IMR-90 (cell line): ENCODE measurements at regions of chr19 and their contacts with region 1.

Region 1: GRCh38 chr19:44903602-44904425 is 1.8 kb upstream of the APOE start:
- DNase-seq: peak; percentile 49
- ATAC-seq: peak; percentile 88
- H3K4me3 ChIP-seq: no peak overlapping the region
- H3K27ac ChIP-seq: no peak overlapping the region
- H3K4me1 ChIP-seq: peaks cover 3% of the 10 kb centered on the region; the same call in 1 of the 2 replicates
- H3K27me3 ChIP-seq: peaks cover 8% of the 10 kb centered on the region
- CTCF ChIP-seq: peak; percentile 95
- POLR2A ChIP-seq: no peak
- RAD21 ChIP-seq: peak; percentile 86

Region 2: GRCh38 chr19:44869733-44870470 is 33.9 kb before region 1 on chr19:
- CTCF ChIA-PET with region 1: no interaction called
- POLR2A ChIA-PET with region 1: no interaction called
- dilution Hi-C with region 1: no loop called
- in situ Hi-C with region 1: no loop called
- intact Hi-C with region 1: no loop called
- DNase-seq: peak; percentile 84
- ATAC-seq: peak; percentile 65
- H3K4me3 ChIP-seq: no peak overlapping the region
- H3K27ac ChIP-seq: no peak overlapping the region
- H3K4me1 ChIP-seq: peaks cover 2% of the 10 kb centered on the region; the same call in 1 of the 2 replicates
- H3K27me3 ChIP-seq: no peaks in the 10 kb centered on the region
- CTCF ChIP-seq: no peak
- POLR2A ChIP-seq: no peak
- RAD21 ChIP-seq: no peak

Region 3: GRCh38 chr19:44954824-44955586 is 51.2 kb after region 1 on chr19 and contains the start of gene CLPTM1:
- CTCF ChIA-PET with region 1: interaction called, 10 read pairs
- POLR2A ChIA-PET with region 1: no interaction called
- dilution Hi-C with region 1: no loop called
- in situ Hi-C with region 1: no loop called
- intact Hi-C with region 1: loop called (anchors 1 kb)
- DNase-seq: peak; percentile 97
- ATAC-seq: peak; percentile 95
- H3K4me3 ChIP-seq: peak within 1 kb of the TSS; percentile 84
- H3K27ac ChIP-seq: peak within 1 kb of the TSS; percentile 95
- H3K4me1 ChIP-seq: peaks cover 7% of the 10 kb centered on the region
- H3K27me3 ChIP-seq: no peaks in the 10 kb centered on the region
- CTCF ChIP-seq: no peak
- POLR2A ChIP-seq: peak; percentile 80
- RAD21 ChIP-seq: no peak
- total RNA-seq, gene CLPTM1: 23.8 and 27.8 TPM in 2 replicates

Region 4: DNA sequence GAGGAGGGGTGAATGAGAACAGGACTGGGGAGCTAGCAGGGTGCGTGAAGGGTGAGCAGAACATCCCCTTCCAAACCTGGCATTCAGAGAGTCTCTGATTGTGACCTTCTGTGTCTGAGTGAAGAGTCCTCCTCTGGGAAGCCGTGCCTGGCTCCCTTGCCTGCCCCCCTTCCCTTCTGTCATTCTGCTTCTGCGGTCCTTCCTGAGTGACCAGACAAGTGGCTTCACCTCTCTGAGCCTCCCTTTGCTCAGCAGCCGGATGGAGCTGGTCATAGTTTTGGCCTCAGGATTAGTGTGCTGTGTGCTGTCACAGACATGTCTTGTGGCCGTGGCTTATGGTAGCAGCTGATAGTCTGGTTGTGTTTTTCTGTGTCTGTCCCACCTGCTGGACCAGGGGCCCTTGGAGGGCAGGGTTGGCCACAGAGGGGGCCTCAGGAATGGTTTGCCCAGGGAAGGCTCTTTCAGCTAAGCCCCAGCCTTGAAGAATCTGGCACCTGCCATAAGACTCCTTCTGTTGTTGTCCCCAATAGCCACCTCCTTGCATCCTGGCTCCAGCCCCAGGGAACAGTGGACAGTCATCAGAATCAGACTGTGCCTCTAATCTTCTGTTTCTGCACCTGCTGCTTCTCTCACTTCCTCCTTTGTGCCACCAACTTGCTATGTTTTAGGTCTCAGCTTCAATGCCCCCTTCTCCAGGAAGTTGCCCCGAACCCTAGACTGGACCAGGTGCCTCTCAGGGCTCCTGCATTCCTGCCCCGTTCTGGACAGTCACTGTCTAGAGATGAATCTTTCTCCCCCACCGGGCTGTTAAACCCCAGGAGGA is 57.3 kb after region 1 on chr19:
- CTCF ChIA-PET with region 1: no interaction called
- POLR2A ChIA-PET with region 1: interaction called, 10 read pairs
- dilution Hi-C with region 1: no loop called
- in situ Hi-C with region 1: no loop called
- intact Hi-C with region 1: no loop called
- DNase-seq: no peak
- ATAC-seq: no peak
- H3K4me3 ChIP-seq: no peak overlapping the region
- H3K27ac ChIP-seq: no peak overlapping the region
- H3K4me1 ChIP-seq: peaks cover 5% of the 10 kb centered on the region
- H3K27me3 ChIP-seq: no peaks in the 10 kb centered on the region
- CTCF ChIP-seq: no peak
- POLR2A ChIP-seq: no peak
- RAD21 ChIP-seq: no peak

Region 5: GRCh38 chr19:44987148-44987675 is 83.4 kb after region 1 on chr19:
- CTCF ChIA-PET with region 1: no interaction called
- POLR2A ChIA-PET with region 1: no interaction called
- dilution Hi-C with region 1: no loop called
- in situ Hi-C with region 1: no loop called
- intact Hi-C with region 1: loop called (anchors 1 kb)
- DNase-seq: no peak
- ATAC-seq: no peak
- H3K4me3 ChIP-seq: no peak overlapping the region
- H3K27ac ChIP-seq: no peak overlapping the region
- H3K4me1 ChIP-seq: no peaks in the 10 kb centered on the region
- H3K27me3 ChIP-seq: no peaks in the 10 kb centered on the region
- CTCF ChIP-seq: no peak
- POLR2A ChIP-seq: no peak
- RAD21 ChIP-seq: no peak

Region 6: GRCh38 chr19:45059278-45059965 is 155.6 kb after region 1 on chr19:
- CTCF ChIA-PET with region 1: interaction called, 3 read pairs
- POLR2A ChIA-PET with region 1: no interaction called
- dilution Hi-C with region 1: no loop called
- in situ Hi-C with region 1: no loop called
- intact Hi-C with region 1: loop called (anchors 2 kb)
- DNase-seq: peak; percentile 69
- ATAC-seq: peak; percentile 86
- H3K4me3 ChIP-seq: no peak overlapping the region
- H3K27ac ChIP-seq: no peak overlapping the region
- H3K4me1 ChIP-seq: no peaks in the 10 kb centered on the region
- H3K27me3 ChIP-seq: no peaks in the 10 kb centered on the region
- CTCF ChIP-seq: peak; percentile 81
- POLR2A ChIP-seq: no peak
- RAD21 ChIP-seq: peak; percentile 77

Region 7: DNA sequence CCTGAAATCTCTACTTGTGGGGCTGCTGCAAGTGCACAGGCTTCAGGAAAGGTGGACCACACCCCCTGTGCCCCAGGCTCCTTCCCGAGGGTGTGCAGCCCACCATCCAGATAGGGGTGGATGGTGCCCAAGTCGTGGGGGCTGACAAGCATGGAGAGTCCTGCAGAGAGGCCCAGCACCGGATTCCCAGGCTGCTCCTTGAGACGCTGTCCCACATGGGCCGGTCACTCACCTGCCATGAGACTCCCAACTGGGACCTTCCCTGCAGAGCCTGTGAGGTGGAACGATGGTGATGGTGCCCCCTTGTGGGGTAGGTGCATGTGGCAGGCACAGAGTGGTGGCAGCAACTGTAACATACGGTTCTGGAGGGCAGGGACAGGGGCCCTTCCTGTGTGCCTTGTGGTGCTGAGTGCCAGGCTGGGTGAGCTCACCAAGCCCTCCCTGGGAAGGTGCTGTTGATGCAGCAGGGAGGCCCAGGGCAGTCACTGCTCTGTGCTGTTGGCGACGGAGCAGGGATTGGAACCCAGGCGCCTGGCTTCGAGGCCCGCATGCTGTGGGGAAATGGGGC is 222.2 kb after region 1 on chr19:
- CTCF ChIA-PET with region 1: no interaction called
- POLR2A ChIA-PET with region 1: no interaction called
- dilution Hi-C with region 1: no loop called
- in situ Hi-C with region 1: no loop called
- intact Hi-C with region 1: no loop called
- DNase-seq: peak; percentile 49
- ATAC-seq: peak; percentile 94
- H3K4me3 ChIP-seq: no peak overlapping the region
- H3K27ac ChIP-seq: no peak overlapping the region
- H3K4me1 ChIP-seq: no peaks in the 10 kb centered on the region
- H3K27me3 ChIP-seq: no peaks in the 10 kb centered on the region
- CTCF ChIP-seq: peak; percentile 66
- POLR2A ChIP-seq: no peak
- RAD21 ChIP-seq: peak; percentile 74